Tibial artery (tissue), 4 donors: ENCODE measurements at regions of chr6 and their contacts with region 1.

Region 1: DNA sequence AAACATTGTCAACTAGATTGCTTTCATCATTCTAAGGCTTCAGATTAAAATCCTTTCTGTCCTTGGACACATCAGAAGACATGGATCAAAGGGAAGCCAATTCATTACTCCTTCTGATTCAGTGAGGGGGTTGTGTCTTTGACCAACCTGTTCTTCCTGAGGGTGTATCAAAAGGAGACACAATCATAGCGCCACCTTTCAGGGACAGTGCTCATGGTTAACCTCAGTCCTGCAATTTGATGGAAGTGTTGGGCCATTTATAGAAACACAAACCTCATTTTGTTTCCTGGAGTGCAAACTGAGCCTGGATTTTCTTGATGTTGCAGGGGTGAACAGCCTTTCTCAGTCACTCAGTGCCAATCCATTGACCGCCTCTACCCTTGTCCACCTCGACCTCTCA is 163.9 kb upstream of the SCGN start:
- DNase-seq: no peak
- H3K4me3 ChIP-seq: no peak overlapping the region
- H3K27ac ChIP-seq: no peak overlapping the region
- H3K4me1 ChIP-seq: peaks cover 0 to 10% (median 10%) of the 10 kb centered on the region in 4 donors
- H3K27me3 ChIP-seq: no peaks in the 10 kb centered on the region
- CTCF ChIP-seq: no peak

Region 2: GRCh38 chr6:25278914-25279747 is 209.0 kb before region 1 on chr6 and contains the start of gene CARMIL1:
- intact Hi-C with region 1: loop called (anchors 2 kb)
- DNase-seq: peak; percentile 76 to 91
- H3K4me3 ChIP-seq: peak within 1 kb of the TSS; percentile 72 to 91
- H3K27ac ChIP-seq: peak within 1 kb of the TSS; percentile 82 to 89
- H3K4me1 ChIP-seq: peaks cover 0 to 52% (median 15%) of the 10 kb centered on the region in 4 donors
- H3K27me3 ChIP-seq: no peaks in the 10 kb centered on the region
- CTCF ChIP-seq: peak; percentile 80 to 82

Region 3: GRCh38 chr6:25511376-25511775 is 23.2 kb after region 1 on chr6:
- intact Hi-C with region 1: no loop called
- DNase-seq: no peak
- H3K4me3 ChIP-seq: no peak overlapping the region
- H3K27ac ChIP-seq: no peak overlapping the region
- H3K4me1 ChIP-seq: no peaks in the 10 kb centered on the region
- H3K27me3 ChIP-seq: no peaks in the 10 kb centered on the region
- CTCF ChIP-seq: no peak